Kidney (tissue), 22 donors: ENCODE measurements at regions of chr9 and their contacts with region 1.

Region 1: DNA sequence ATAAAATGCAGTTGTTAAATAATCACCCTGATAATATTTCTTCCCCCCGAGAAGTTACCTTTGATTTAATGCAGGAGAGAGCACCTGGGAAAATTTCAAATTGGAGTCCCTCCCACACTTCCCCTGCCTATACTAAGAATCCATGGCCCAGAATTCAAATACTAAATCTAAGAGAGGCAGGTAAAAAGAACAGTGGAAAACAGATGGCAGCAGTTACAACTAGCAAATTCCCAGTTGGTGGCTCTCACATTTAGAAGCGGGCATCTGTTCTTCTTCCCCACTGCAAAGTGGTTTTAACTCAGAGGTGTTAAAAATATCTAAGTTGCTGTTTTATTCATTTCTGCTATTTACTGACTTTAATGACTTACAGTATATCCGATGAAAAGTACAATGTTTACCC is 210.4 kb upstream of the ELAVL2 start:
- DNase-seq: no peak
- H3K4me3 ChIP-seq: no peak overlapping the region
- H3K27ac ChIP-seq: no peak overlapping the region
- H3K4me1 ChIP-seq: no peaks in the 10 kb centered on the region
- H3K27me3 ChIP-seq: no peaks in the 10 kb centered on the region
- CTCF ChIP-seq: no peak

Region 2: GRCh38 chr9:23979491-23979890 is 57.0 kb before region 1 on chr9:
- intact Hi-C with region 1: loop called (anchors 10 kb)
- DNase-seq: no peak
- H3K4me3 ChIP-seq: no peak overlapping the region
- H3K27ac ChIP-seq: no peak overlapping the region
- H3K4me1 ChIP-seq: no peaks in the 10 kb centered on the region
- H3K27me3 ChIP-seq: no peaks in the 10 kb centered on the region
- CTCF ChIP-seq: no peak

Region 3: GRCh38 chr9:24382566-24382965 is 346.1 kb after region 1 on chr9:
- intact Hi-C with region 1: no loop called
- DNase-seq: no peak
- H3K4me3 ChIP-seq: no peak overlapping the region
- H3K27ac ChIP-seq: no peak overlapping the region
- H3K4me1 ChIP-seq: no peaks in the 10 kb centered on the region
- H3K27me3 ChIP-seq: no peaks in the 10 kb centered on the region
- CTCF ChIP-seq: no peak

Region 4: DNA sequence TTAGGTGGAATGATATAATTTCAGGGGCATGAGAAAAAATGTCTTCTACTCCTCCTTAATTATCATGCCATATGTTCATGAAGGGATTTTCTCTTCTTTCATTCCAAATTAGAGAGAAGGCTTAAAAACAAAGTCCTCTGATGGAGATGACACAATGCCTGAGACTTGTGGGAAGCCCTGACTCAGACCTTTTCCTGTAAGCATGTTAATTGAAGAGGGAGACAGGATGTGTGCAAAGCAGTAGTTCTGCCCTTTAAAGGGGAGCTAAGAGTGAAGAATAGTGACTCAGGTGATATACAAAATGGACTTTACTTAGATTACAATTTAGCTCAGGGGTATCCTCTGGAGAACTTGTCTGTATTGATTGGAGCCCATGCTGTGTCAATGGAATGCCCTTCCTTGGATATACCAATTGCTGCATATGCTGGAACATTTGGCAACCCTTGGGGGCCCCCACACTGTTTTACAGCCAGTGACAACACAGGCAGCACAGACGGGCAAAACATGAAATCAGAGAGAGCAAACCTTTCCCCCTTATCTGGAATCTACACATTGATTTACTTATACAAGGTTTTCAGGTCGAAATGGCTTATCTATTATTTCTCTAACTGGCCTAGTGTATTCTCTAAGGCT is 428.0 kb after region 1 on chr9:
- intact Hi-C with region 1: no loop called
- DNase-seq: no peak
- H3K4me3 ChIP-seq: no peak overlapping the region
- H3K27ac ChIP-seq: no peak overlapping the region
- H3K4me1 ChIP-seq: no peaks in the 10 kb centered on the region
- H3K27me3 ChIP-seq: no peaks in the 10 kb centered on the region
- CTCF ChIP-seq: no peak